Naive thymus-derived CD4-positive, alpha-beta T cell (primary cell): ENCODE measurements at regions of chr1 and their contacts with region 1.

Region 1: DNA sequence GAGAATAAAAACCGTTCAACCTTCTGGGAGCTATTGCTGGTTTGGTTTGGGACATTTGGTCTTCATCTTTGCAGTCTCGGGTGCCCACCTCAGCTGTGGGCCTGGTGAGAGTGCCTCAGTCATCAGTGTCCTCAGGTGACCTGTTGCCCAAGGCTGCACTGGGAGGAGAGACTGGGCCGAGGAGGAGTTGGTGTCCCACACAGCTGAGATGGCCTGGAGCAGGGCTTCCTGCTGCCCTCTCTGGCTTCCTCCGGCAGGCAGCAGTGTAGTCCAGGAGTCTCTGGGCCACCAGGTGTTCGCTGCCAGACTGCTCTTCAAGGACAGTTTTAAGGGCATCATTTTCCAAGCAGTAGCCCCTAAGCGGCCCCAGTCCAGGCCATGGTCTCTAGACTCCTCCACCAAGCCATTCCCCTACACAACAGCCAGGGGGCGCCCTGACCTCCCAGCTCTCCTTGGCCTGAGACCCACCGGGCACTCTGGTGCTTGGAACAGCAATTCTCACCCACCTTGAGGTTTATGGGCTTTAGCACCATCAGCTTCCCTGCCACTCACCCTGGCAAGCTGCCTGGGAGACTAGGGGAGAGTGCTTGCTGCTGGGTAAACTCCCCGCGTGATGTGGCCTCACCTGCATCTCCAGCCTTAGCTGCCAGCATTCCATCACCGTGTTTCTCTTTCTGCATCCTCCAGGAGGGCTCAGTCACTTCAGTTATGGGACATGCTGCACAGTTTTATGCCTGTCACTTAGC is 9.1 kb upstream of the SYTL1 start:
- DNase-seq: peak in 8 of 9 donors; percentile 49 to 71 (median 56)
- ATAC-seq: peak; percentile 90
- H3K4me3 ChIP-seq: no peak overlapping the region
- H3K4me3 Mint-ChIP-seq: no peak overlapping the region
- H3K27ac ChIP-seq: no peak overlapping the region
- H3K27ac Mint-ChIP-seq: peak overlapping the region in 5 of 9 donors; percentile 21 to 67 (median 50)
- H3K4me1 ChIP-seq: peaks cover 7 to 11% of the 10 kb centered on the region in 2 donors
- H3K4me1 Mint-ChIP-seq: peaks cover 29 to 51% (median 44%) of the 10 kb centered on the region in 7 donors
- H3K27me3 ChIP-seq: no peaks in the 10 kb centered on the region
- H3K27me3 Mint-ChIP-seq: no peaks in the 10 kb centered on the region

Region 2: DNA sequence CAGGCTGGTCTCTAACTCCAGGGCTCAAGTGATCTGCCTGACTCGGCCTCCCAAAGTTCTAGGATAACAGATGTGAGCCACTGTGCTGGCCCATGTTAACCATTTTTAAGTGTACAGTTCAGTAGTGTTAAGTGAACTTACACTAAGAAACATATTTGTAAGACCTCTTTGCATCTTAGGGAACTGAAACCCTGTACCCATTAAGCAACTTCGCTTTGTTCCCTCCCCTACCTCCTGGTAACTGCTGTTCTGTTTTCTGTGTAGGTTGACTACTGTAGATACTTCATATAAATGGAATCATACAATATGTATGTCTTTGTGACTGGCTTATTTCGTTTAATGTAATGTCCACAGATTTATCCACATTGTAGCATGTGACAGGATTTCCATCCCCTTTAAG is 400.2 kb before region 1 on chr1:
- CTCF ChIA-PET with region 1: no interaction called
- POLR2A ChIA-PET with region 1: no interaction called
- intact Hi-C with region 1: no loop called
- DNase-seq: no peak
- ATAC-seq: peak; percentile 73
- H3K4me3 ChIP-seq: no peak overlapping the region
- H3K4me3 Mint-ChIP-seq: no peak overlapping the region
- H3K27ac ChIP-seq: no peak overlapping the region
- H3K27ac Mint-ChIP-seq: no peak overlapping the region
- H3K4me1 ChIP-seq: no peaks in the 10 kb centered on the region
- H3K4me1 Mint-ChIP-seq: peaks cover 0 to 12% (median 9%) of the 10 kb centered on the region in 7 donors
- H3K27me3 ChIP-seq: no peaks in the 10 kb centered on the region
- H3K27me3 Mint-ChIP-seq: no peaks in the 10 kb centered on the region

Region 3: GRCh38 chr1:27284425-27285273 is 48.1 kb before region 1 on chr1:
- CTCF ChIA-PET with region 1: no interaction called
- POLR2A ChIA-PET with region 1: no interaction called
- intact Hi-C with region 1: no loop called
- DNase-seq: peak; percentile 70 to 88 (median 85)
- ATAC-seq: peak; percentile 96
- H3K4me3 ChIP-seq: no peak overlapping the region
- H3K4me3 Mint-ChIP-seq: no peak overlapping the region
- H3K27ac ChIP-seq: no peak overlapping the region
- H3K27ac Mint-ChIP-seq: peak overlapping the region in 5 of 9 donors; percentile 14 to 72 (median 57)
- H3K4me1 ChIP-seq: no peaks in the 10 kb centered on the region
- H3K4me1 Mint-ChIP-seq: peaks cover 0 to 12% (median 3%) of the 10 kb centered on the region in 7 donors
- H3K27me3 ChIP-seq: no peaks in the 10 kb centered on the region
- H3K27me3 Mint-ChIP-seq: no peaks in the 10 kb centered on the region

Region 4: DNA sequence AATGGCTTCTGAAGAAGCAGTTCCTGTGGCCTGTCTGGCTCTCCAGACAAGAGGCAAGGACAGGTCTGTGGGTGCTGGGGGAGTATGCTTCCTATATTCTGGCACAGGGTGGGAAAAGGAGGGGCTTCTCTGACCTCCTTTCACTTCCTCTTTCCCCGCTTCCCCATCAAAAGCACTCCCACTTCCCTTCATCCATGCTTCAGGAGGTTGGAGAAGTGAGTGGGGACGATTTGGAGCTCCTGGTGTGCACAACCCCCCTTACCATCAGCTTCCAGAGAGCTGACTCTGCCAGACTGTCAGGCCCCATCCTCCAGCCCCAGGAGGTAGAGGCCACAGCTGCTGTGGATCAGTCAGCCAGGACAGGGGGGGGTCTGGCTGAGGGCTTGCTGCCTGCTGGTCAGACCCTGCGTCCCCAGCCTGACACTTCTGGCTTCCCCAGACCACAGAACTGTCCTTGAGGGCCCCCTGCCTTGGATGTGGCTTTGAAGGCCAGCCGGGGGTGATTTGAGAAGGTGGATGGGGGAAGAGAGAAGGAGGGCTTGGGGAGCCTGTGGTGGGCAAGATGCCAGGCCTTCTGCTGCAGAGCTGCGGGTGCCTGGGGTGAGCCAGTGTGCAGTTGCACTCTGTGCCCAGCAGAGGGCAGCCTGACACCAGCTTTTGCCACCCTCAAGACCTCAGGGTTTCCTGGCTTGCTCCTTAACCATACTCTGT is 32.2 kb before region 1 on chr1:
- CTCF ChIA-PET with region 1: interaction called, 10 read pairs
- POLR2A ChIA-PET with region 1: no interaction called
- intact Hi-C with region 1: loop called in 1 of 2 experiments (anchors 2 kb)
- DNase-seq: peak; percentile 66 to 84 (median 76)
- ATAC-seq: peak; percentile 95
- H3K4me3 ChIP-seq: no peak overlapping the region
- H3K4me3 Mint-ChIP-seq: no peak overlapping the region
- H3K27ac ChIP-seq: no peak overlapping the region
- H3K27ac Mint-ChIP-seq: no peak overlapping the region
- H3K4me1 ChIP-seq: no peaks in the 10 kb centered on the region
- H3K4me1 Mint-ChIP-seq: peaks cover 0 to 9% (median 3%) of the 10 kb centered on the region in 7 donors
- H3K27me3 ChIP-seq: no peaks in the 10 kb centered on the region
- H3K27me3 Mint-ChIP-seq: no peaks in the 10 kb centered on the region

Region 5: DNA sequence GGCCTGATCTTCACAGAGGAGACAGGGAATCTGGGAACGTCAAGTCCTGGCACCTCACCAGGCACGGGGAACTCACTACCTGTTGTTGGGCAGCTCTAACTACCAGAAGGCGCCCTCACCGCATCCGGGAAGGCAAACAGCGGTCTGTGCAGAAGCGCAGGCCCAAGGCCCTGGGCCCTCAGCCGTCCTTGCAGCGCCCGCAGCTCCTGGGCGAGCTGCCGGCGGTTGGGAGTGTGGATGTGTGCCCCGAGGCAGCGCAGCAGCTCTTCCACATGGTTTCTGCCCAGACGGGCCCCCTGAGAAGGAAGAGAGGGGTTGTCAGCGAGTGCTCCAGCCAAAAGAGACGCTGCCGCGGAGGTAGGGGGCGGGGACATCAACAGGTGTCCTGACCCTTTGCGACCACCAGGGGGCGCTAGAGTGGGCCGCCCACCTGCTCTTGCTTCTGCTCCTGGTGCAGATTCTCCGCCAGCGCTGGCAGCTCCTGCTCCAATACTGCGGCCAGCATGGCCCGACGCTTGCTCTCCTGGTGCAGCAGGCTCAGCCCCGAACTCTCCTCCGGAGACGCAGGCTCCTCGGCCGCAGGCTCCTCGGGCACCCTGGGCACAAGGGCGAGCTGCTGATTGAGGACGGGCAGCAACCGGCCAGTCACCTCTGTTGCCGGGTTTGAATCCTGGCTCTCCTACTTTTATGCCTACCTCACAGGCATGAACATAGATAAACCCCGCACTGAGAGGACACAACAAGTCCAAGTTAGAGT is 24.8 kb after region 1 on chr1:
- CTCF ChIA-PET with region 1: interaction called, 44 read pairs
- POLR2A ChIA-PET with region 1: interaction called, 15 read pairs
- intact Hi-C with region 1: no loop called
- DNase-seq: peak; percentile 76 to 89 (median 85)
- ATAC-seq: peak; percentile 94
- H3K4me3 ChIP-seq: peak overlapping the region; percentile 76
- H3K4me3 Mint-ChIP-seq: peak overlapping the region; percentile 74 to 88 (median 80)
- H3K27ac ChIP-seq: peak overlapping the region; percentile 70
- H3K27ac Mint-ChIP-seq: peak overlapping the region; percentile 62 to 90 (median 88)
- H3K4me1 ChIP-seq: peaks cover 37 to 41% of the 10 kb centered on the region in 2 donors
- H3K4me1 Mint-ChIP-seq: peaks cover 23 to 56% (median 45%) of the 10 kb centered on the region in 7 donors
- H3K27me3 ChIP-seq: no peaks in the 10 kb centered on the region
- H3K27me3 Mint-ChIP-seq: no peaks in the 10 kb centered on the region

Region 6: DNA sequence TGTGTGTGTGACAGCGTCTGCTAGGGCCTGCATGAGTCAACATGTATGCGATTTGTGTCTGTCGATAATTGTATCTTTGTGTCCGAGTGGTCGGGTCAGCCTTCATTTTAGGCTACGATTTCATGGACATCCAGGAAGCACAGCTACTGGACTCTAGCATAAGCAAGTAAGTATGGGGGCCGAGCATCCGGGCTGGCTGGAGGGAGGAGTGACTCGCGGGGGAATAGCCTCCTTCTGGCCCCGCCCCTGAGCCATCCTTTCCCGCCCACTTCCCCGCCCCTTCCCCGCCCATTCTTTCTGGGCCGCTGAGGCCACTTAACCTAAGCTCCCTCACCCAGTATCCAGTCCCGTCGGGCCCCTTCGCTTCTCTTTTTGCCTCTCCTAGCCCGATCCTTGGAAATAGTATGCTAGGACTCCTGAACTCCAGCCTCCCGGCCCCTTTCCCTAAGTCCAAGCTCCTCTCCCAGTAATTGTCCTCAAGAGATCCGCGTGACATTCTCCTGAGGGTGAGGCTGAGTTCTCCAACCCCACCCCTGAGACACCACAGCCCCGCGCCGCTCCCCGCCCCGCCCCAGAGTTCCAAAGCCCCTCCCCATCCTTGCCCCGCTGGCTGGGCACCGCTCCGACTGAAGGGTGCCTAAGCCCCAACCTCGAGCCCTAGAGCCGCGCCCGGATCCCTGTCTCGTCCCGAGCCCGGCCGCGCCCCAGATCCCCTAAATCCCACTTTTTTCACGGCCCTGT is 32.8 kb after region 1 on chr1:
- CTCF ChIA-PET with region 1: interaction called, 8 read pairs
- POLR2A ChIA-PET with region 1: interaction called, 6 read pairs
- intact Hi-C with region 1: loop called in 1 of 2 experiments (anchors 2 kb)
- DNase-seq: peak; percentile 48 to 77 (median 67)
- ATAC-seq: peak; percentile 78
- H3K4me3 ChIP-seq: peak overlapping the region; percentile 61
- H3K4me3 Mint-ChIP-seq: peak overlapping the region; percentile 74 to 93 (median 88)
- H3K27ac ChIP-seq: peak overlapping the region; percentile 60
- H3K27ac Mint-ChIP-seq: peak overlapping the region; percentile 54 to 90 (median 73)
- H3K4me1 ChIP-seq: peaks cover 13 to 17% of the 10 kb centered on the region in 2 donors
- H3K4me1 Mint-ChIP-seq: peaks cover 21 to 55% (median 42%) of the 10 kb centered on the region in 7 donors
- H3K27me3 ChIP-seq: no peaks in the 10 kb centered on the region
- H3K27me3 Mint-ChIP-seq: no peaks in the 10 kb centered on the region

Region 7: DNA sequence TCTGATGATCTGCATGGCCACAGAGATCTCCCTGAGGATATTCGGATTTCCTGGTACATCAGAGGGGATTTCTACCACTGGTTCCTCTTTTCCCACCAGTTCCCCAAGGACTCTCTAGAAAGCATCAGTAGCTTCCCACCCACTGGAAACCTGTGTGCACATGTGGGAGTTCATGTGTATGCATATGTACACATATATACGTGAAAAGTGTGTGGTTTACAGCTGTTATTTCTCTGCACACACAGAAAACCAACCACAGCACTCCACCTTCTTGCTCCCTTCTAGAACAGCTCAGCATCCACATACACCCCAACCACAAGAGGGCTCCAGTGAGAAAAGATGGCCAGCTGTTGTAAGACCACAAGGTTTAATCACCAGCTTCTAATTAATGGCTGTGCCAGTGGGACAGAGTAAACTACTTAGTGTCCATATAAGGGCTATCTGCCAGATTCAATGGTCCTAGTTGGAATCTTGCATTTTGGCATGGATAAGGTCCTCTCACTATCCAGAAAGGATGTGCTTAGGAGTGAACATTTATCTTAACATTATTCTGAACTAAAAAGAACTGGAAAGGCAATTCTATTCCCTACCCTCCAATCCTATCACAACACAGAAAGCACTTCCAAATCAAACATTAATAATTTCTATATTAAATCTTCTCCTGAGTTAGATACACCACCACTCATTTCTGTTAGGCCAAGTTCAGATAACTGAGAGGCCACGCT is 83.8 kb after region 1 on chr1:
- CTCF ChIA-PET with region 1: no interaction called
- POLR2A ChIA-PET with region 1: no interaction called
- intact Hi-C with region 1: no loop called
- DNase-seq: peak in 7 of 9 donors; percentile 44 to 67 (median 56)
- ATAC-seq: peak; percentile 87
- H3K4me3 ChIP-seq: no peak overlapping the region
- H3K4me3 Mint-ChIP-seq: no peak overlapping the region
- H3K27ac ChIP-seq: peak overlapping the region; percentile 10
- H3K27ac Mint-ChIP-seq: peak overlapping the region; percentile 3 to 85 (median 53)
- H3K4me1 ChIP-seq: peaks cover 0 to 11% of the 10 kb centered on the region in 2 donors
- H3K4me1 Mint-ChIP-seq: peaks cover 12 to 46% (median 35%) of the 10 kb centered on the region in 7 donors
- H3K27me3 ChIP-seq: no peaks in the 10 kb centered on the region
- H3K27me3 Mint-ChIP-seq: no peaks in the 10 kb centered on the region